Ovary (tissue), 10 donors: ENCODE measurements at regions of chr20 and their contacts with region 1.

Region 1: DNA sequence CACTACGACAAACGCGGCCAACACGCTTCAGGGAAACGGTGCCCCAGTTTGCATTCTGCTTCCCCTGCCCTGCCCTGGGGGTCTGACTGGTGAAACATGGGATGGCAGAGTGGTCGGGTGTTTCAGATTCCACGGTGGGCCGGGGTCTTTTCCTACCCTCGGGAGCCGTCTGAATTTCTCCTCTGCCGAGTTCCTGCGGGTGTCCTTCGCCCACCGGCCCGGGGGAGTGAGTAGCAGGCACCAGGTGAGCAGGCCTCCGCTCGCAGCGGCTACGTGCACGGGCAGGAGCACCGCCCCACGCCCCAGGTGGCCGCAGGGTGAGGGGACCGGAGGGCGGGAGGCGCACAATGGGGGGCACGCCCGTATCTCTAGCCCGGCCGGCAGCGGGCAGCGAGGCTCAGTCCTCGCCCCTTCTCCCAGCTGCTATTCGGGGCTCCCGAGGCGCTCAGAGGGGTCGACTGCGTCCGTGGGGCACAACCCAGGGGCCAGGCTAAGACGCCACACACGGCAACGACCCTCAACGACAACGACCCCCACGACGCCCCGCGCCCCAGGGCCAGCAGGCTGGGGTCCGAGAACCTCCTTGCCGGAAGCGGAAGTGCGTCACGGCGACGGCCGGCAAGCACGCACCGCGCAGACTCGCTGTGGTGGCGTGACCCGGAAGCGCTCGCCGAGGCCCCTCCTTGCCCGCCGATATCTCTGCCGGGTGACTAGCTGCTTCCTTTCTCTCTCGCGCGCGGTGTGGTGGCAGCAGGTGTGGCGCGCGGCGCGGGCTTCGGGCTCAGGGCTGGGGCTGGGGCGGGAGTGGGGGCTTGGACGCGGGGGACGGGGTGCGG is at the start of gene RPS21:
- DNase-seq: peak; percentile 91 to 96 (median 92)
- H3K4me3 ChIP-seq: peak within 1 kb of the TSS; percentile 92
- H3K27ac ChIP-seq: peak within 1 kb of the TSS; percentile 65 to 75
- H3K4me1 ChIP-seq: peaks cover 12% of the 10 kb centered on the region
- H3K27me3 ChIP-seq: no peaks in the 10 kb centered on the region
- CTCF ChIP-seq: no peak
- EP300 ChIP-seq: no peak
- POLR2A ChIP-seq: peak; percentile 84
- total RNA-seq, gene RPS21: 2,424 to 8,739 (median 2,977) TPM

Region 2: GRCh38 chr20:62010551-62011402 is 375.8 kb before region 1 on chr20:
- intact Hi-C with region 1: loop called in 1 of 4 experiments (anchors 5 kb)
- DNase-seq: peak; percentile 54 to 72 (median 70)
- H3K4me3 ChIP-seq: no peak overlapping the region
- H3K27ac ChIP-seq: no peak overlapping the region
- H3K4me1 ChIP-seq: peaks cover 2% of the 10 kb centered on the region
- H3K27me3 ChIP-seq: no peaks in the 10 kb centered on the region
- CTCF ChIP-seq: peak; percentile 32 to 68 (median 60)
- EP300 ChIP-seq: no peak
- POLR2A ChIP-seq: no peak

Region 3: DNA sequence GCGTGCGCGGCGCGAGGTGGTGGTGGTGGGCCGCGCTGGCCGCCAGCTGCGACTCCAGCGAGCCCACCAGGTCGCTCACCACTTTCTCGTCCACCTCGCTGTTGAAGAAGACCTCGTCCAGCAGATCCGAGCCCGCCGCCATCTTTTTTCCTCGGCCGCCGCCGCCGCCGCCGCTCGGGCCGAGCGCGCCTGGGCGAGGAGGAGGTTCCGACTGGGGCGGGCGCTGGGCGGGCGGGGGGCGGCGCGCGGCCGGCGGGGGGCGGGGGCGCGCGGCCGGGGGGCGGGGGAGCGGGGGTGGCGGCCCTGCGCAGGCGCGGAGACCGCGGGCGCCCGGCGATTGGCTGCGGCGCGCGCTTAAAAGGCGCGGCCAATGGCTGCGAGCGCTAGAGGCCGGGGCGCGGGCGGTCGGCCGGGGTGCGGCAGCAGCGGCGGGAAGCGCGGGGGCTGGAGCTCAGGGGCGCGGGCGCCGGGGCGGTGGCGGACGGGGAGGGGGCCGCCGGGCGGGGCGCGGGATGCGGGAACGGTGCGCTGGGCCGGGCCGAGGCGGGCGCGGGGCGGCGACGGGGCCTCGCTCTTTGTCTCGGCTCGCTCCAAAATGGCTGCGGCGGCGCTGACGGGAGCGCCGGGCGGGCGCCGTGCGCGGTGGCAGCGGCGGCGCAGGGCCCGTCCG is 320.8 kb before region 1 on chr20 and contains the start of gene TAF4:
- intact Hi-C with region 1: loop called in 1 of 4 experiments (anchors 5 kb)
- DNase-seq: peak; percentile 72 to 88 (median 80)
- H3K4me3 ChIP-seq: peak within 1 kb of the TSS; percentile 65
- H3K27ac ChIP-seq: peak within 1 kb of the TSS; percentile 80 to 90
- H3K4me1 ChIP-seq: peaks cover 21% of the 10 kb centered on the region
- H3K27me3 ChIP-seq: no peaks in the 10 kb centered on the region
- CTCF ChIP-seq: no peak
- EP300 ChIP-seq: no peak
- POLR2A ChIP-seq: peak; percentile 60
- total RNA-seq, gene TAF4: 15.6 to 34.7 (median 28.1) TPM

Region 4: GRCh38 chr20:62143118-62143973 is 243.3 kb before region 1 on chr20 and contains the starts of genes PSMA7 and SS18L1:
- intact Hi-C with region 1: loop called in 1 of 4 experiments (anchors 5 kb)
- DNase-seq: peak; percentile 83 to 90 (median 86)
- H3K4me3 ChIP-seq: peak within 1 kb of the TSS; percentile 68
- H3K27ac ChIP-seq: peak within 1 kb of the TSS; percentile 98 to 100
- H3K4me1 ChIP-seq: peaks cover 14% of the 10 kb centered on the region
- H3K27me3 ChIP-seq: no peaks in the 10 kb centered on the region
- CTCF ChIP-seq: no peak
- EP300 ChIP-seq: no peak
- POLR2A ChIP-seq: peak; percentile 88
- total RNA-seq, gene PSMA7: 163 to 214 (median 168) TPM
- total RNA-seq, gene SS18L1: 9.5 to 14.3 (median 12.4) TPM

Region 5: GRCh38 chr20:62237801-62238571 is 148.6 kb before region 1 on chr20 and contains the start of gene OSBPL2:
- intact Hi-C with region 1: loop called in 1 of 4 experiments (anchors 5 kb)
- DNase-seq: peak; percentile 99 to 100 (median 99)
- H3K4me3 ChIP-seq: peak within 1 kb of the TSS; percentile 62
- H3K27ac ChIP-seq: peak within 1 kb of the TSS; percentile 59 to 62
- H3K4me1 ChIP-seq: peaks cover 15% of the 10 kb centered on the region
- H3K27me3 ChIP-seq: no peaks in the 10 kb centered on the region
- CTCF ChIP-seq: no peak
- EP300 ChIP-seq: peak; percentile 15
- POLR2A ChIP-seq: no peak
- total RNA-seq, gene OSBPL2: 17.9 to 42.2 (median 36.6) TPM

Region 6: GRCh38 chr20:62302341-62303058 is 84.1 kb before region 1 on chr20 and contains the start of gene ADRM1:
- intact Hi-C with region 1: loop called in 1 of 4 experiments (anchors 2 kb)
- DNase-seq: peak; percentile 94 to 98 (median 95)
- H3K4me3 ChIP-seq: peak within 1 kb of the TSS; percentile 88
- H3K27ac ChIP-seq: peak within 1 kb of the TSS; percentile 88 to 98
- H3K4me1 ChIP-seq: peaks cover 11% of the 10 kb centered on the region
- H3K27me3 ChIP-seq: no peaks in the 10 kb centered on the region
- CTCF ChIP-seq: peak; percentile 87 to 99 (median 98)
- EP300 ChIP-seq: no peak
- POLR2A ChIP-seq: peak; percentile 37
- total RNA-seq, gene ADRM1: 42.8 to 109 (median 56.3) TPM

Region 7: DNA sequence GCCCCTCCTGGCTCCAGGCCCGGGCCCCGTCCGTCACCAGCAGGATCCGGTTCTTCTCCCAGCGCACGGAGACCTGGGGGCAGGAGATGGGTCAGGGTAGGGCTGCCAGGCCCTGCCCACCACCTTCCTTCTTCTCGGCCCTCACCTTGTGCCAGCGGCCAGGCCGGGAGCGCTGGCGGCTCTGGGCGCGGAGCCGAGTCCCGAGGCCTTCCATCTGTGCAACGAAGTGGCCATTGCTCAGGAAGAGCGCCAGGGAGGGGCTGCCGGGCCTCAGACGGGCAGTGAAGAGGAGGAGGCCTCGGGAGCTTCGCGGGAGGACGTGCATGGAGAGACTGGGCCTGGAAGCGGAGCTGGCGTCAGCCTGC is 75.9 kb before region 1 on chr20:
- intact Hi-C with region 1: loop called in 1 of 4 experiments (anchors 5 kb)
- DNase-seq: peak in 3 of 5 donors; percentile 63 to 70 (median 65)
- H3K4me3 ChIP-seq: no peak overlapping the region
- H3K27ac ChIP-seq: peak overlapping the region; percentile 20 to 77
- H3K4me1 ChIP-seq: no peaks in the 10 kb centered on the region
- H3K27me3 ChIP-seq: no peaks in the 10 kb centered on the region
- CTCF ChIP-seq: no peak
- EP300 ChIP-seq: no peak
- POLR2A ChIP-seq: no peak

Region 8: GRCh38 chr20:62437927-62438326 is 51.3 kb after region 1 on chr20:
- intact Hi-C with region 1: no loop called
- DNase-seq: no peak
- H3K4me3 ChIP-seq: no peak overlapping the region
- H3K27ac ChIP-seq: no peak overlapping the region
- H3K4me1 ChIP-seq: no peaks in the 10 kb centered on the region
- H3K27me3 ChIP-seq: no peaks in the 10 kb centered on the region
- CTCF ChIP-seq: no peak
- EP300 ChIP-seq: no peak
- POLR2A ChIP-seq: no peak

Region 9: GRCh38 chr20:64030371-64031134 is 1644.0 kb after region 1 on chr20:
- intact Hi-C with region 1: no loop called
- DNase-seq: no peak
- H3K4me3 ChIP-seq: no peak overlapping the region
- H3K27ac ChIP-seq: no peak overlapping the region
- H3K4me1 ChIP-seq: peaks cover 3% of the 10 kb centered on the region
- H3K27me3 ChIP-seq: no peaks in the 10 kb centered on the region
- CTCF ChIP-seq: no peak
- EP300 ChIP-seq: no peak
- POLR2A ChIP-seq: no peak